HepG2 (cell line): ENCODE measurements at regions of chr1 and their contacts with region 1.

Region 1: GRCh38 chr1:99707535-99708142 is 58.8 kb downstream of the FRRS1 start:
- DNase-seq: peak; percentile 55
- ATAC-seq: peak; percentile 74
- H3K4me3 ChIP-seq: no peak overlapping the region
- H3K27ac ChIP-seq: no peak overlapping the region
- H3K4me1 ChIP-seq: no peaks in the 10 kb centered on the region
- H3K27me3 ChIP-seq: no peaks in the 10 kb centered on the region
- CTCF ChIP-seq: peak; percentile 83
- EP300 ChIP-seq: no peak
- POLR2A ChIP-seq: no peak
- RAD21 ChIP-seq: peak; percentile 76

Region 2: GRCh38 chr1:98991127-98992012 is 716.3 kb before region 1 on chr1:
- CTCF ChIA-PET with region 1: no interaction called
- POLR2A ChIA-PET with region 1: no interaction called
- in situ Hi-C with region 1: loop called (anchors 25 kb)
- intact Hi-C with region 1: loop called (anchors 2 kb)
- DNase-seq: peak; percentile 21
- ATAC-seq: peak; percentile 72
- H3K4me3 ChIP-seq: no peak overlapping the region
- H3K27ac ChIP-seq: no peak overlapping the region
- H3K4me1 ChIP-seq: no peaks in the 10 kb centered on the region
- H3K27me3 ChIP-seq: no peaks in the 10 kb centered on the region
- CTCF ChIP-seq: peak; percentile 32; the same call in 1 of the 2 replicates
- EP300 ChIP-seq: no peak
- POLR2A ChIP-seq: no peak
- RAD21 ChIP-seq: no peak

Region 3: GRCh38 chr1:99170516-99170915 is 537.1 kb before region 1 on chr1:
- CTCF ChIA-PET with region 1: no interaction called
- POLR2A ChIA-PET with region 1: no interaction called
- in situ Hi-C with region 1: loop called (anchors 10 kb)
- intact Hi-C with region 1: no loop called
- DNase-seq: no peak
- ATAC-seq: no peak
- H3K4me3 ChIP-seq: no peak overlapping the region
- H3K27ac ChIP-seq: no peak overlapping the region
- H3K4me1 ChIP-seq: no peaks in the 10 kb centered on the region
- H3K27me3 ChIP-seq: no peaks in the 10 kb centered on the region
- CTCF ChIP-seq: no peak
- EP300 ChIP-seq: no peak
- POLR2A ChIP-seq: no peak
- RAD21 ChIP-seq: no peak

Region 4: GRCh38 chr1:99326215-99326949 is 381.3 kb before region 1 on chr1:
- CTCF ChIA-PET with region 1: no interaction called
- POLR2A ChIA-PET with region 1: no interaction called
- in situ Hi-C with region 1: loop called (anchors 10 kb)
- intact Hi-C with region 1: loop called (anchors 2 kb)
- DNase-seq: peak; percentile 13
- ATAC-seq: no peak
- H3K4me3 ChIP-seq: no peak overlapping the region
- H3K27ac ChIP-seq: no peak overlapping the region
- H3K4me1 ChIP-seq: no peaks in the 10 kb centered on the region
- H3K27me3 ChIP-seq: no peaks in the 10 kb centered on the region
- CTCF ChIP-seq: peak; percentile 36
- EP300 ChIP-seq: no peak
- POLR2A ChIP-seq: no peak
- RAD21 ChIP-seq: no peak

Region 5: DNA sequence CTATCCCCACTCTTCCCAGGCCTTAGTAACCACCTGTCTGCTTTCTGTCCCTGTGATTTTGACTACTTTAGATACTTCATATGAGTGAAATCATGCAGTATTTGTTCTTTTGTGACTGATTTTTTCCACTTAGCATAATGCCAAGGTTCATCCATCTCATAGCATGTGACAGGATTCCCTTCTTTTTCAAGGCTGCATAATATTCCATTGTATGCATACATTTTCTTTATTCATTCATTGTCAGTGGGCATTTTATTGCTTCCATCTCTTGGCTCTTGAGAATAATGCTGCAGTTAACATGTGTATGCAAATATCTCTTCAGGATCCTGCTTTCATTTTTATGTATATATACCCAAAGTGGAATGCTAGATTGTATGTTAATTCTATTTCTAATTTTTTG is 198.9 kb after region 1 on chr1:
- CTCF ChIA-PET with region 1: no interaction called
- POLR2A ChIA-PET with region 1: no interaction called
- in situ Hi-C with region 1: no loop called
- intact Hi-C with region 1: no loop called
- DNase-seq: no peak
- ATAC-seq: no peak
- H3K4me3 ChIP-seq: no peak overlapping the region
- H3K27ac ChIP-seq: no peak overlapping the region
- H3K4me1 ChIP-seq: no peaks in the 10 kb centered on the region
- H3K27me3 ChIP-seq: no peaks in the 10 kb centered on the region
- CTCF ChIP-seq: no peak
- EP300 ChIP-seq: no peak
- POLR2A ChIP-seq: no peak
- RAD21 ChIP-seq: no peak